ENCODE measurements at regions of chr2 and their contacts with region 1.

Region 1: GRCh38 chr2:43484323-43484930 is 111.4 kb downstream of the THADA start:
- DNase-seq: no peak
- H3K4me3 ChIP-seq: no peak overlapping the region
- H3K27ac ChIP-seq: peak overlapping the region in 1 of 2 donors; percentile 78
- H3K4me1 ChIP-seq: peaks cover 0 to 34% of the 10 kb centered on the region in 2 donors
- H3K27me3 ChIP-seq: no peaks in the 10 kb centered on the region
- CTCF ChIP-seq: peak; percentile 46 to 74 (median 71)

Region 2: GRCh38 chr2:42944779-42945415 is 539.5 kb before region 1 on chr2:
- intact Hi-C with region 1: loop called (anchors 2 kb)
- DNase-seq: no peak
- H3K4me3 ChIP-seq: no peak overlapping the region
- H3K27ac ChIP-seq: no peak overlapping the region
- H3K4me1 ChIP-seq: peaks cover 0 to 3% of the 10 kb centered on the region in 2 donors
- H3K27me3 ChIP-seq: no peaks in the 10 kb centered on the region
- CTCF ChIP-seq: no peak

Region 3: DNA sequence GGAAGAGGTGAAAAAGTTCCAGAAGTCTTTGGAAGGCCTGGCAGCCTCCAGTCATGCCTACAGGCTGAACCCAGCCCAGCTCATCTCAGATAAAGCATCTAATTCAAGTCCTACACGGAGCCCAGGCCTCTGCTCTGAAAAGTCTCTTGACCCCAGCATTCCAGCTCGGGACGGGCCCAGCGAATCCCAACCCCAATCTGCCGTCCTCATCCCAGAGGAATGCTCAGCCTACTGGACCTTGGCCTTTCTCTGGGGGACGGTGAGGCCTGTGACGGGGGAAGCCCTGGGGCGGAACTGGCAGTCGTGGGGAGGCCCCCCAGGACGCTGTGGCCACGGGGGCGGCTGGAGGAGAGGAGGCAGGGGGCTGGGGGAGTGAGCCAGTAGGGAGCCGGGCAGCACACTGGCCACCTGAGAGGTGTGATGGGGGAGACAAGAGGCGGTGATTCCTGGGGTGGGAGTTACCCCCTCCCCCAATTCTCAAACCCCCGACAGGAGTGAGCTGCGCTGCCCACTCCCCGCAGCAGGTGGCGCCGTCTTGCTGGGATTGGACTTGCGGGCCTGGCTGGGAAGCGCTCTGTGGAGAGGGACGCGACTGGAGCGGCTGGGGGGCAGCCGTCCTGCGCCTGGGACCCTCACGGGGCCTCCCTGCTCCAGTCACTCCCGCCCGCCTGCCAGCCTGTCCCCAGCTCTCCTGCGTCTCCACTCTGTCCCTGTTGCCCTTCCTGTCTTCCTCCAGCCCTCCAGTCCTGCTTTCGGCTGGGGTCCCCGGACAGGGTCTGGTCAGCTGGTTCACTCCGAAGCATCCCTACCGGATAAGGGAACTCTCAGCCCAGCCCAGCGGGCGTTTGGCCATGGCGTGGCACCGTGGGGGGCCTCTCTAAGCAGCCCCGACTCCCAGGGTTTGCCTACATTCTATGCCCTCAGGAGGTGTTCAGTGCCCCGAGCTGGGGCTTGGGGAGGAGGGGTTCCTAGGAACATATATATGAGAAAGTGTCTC is 509.4 kb before region 1 on chr2:
- intact Hi-C with region 1: loop called (anchors 2 kb)
- DNase-seq: peak in 1 of 2 donors; percentile 87
- H3K4me3 ChIP-seq: peak overlapping the region; percentile 23 to 66
- H3K27ac ChIP-seq: peak overlapping the region; percentile 28 to 66
- H3K4me1 ChIP-seq: peaks cover 7 to 12% of the 10 kb centered on the region in 2 donors
- H3K27me3 ChIP-seq: no peaks in the 10 kb centered on the region
- CTCF ChIP-seq: peak; percentile 93 to 98 (median 97)

Region 4: DNA sequence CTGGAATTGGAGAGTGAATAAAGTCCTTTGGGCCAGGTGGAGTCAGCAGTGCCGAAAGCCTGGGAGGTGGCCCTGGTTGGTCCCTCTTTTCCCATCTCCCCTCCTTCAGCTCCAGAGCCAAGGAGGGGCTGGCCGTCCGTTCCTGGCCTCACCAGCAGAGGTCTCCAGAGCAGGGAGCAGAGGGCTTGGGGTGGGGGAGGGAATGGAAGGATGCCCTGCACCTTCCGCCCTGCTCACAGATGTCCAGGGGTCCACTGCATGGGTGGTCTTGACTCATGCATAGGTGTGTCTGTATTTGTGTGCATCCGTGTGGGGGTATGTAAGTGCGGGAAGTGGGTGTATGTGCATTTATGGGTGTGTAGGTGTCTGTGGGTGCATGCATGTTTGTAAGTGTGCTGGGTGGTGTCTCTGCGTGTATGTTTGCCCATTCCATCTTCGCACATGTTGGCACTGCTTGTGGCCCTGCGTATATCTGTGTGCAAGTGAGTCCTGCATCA is 459.9 kb before region 1 on chr2:
- intact Hi-C with region 1: loop called (anchors 1 kb)
- DNase-seq: peak; percentile 33 to 80
- H3K4me3 ChIP-seq: no peak overlapping the region
- H3K27ac ChIP-seq: no peak overlapping the region
- H3K4me1 ChIP-seq: no peaks in the 10 kb centered on the region
- H3K27me3 ChIP-seq: no peaks in the 10 kb centered on the region
- CTCF ChIP-seq: peak; percentile 84 to 93 (median 89)

Region 5: GRCh38 chr2:43408407-43409160 is 75.8 kb before region 1 on chr2:
- intact Hi-C with region 1: no loop called
- DNase-seq: no peak
- H3K4me3 ChIP-seq: no peak overlapping the region
- H3K27ac ChIP-seq: no peak overlapping the region
- H3K4me1 ChIP-seq: peaks cover 7 to 41% of the 10 kb centered on the region in 2 donors
- H3K27me3 ChIP-seq: no peaks in the 10 kb centered on the region
- CTCF ChIP-seq: no peak

Measured in ascending aorta (tissue), 2 donors.